HepG2 (cell line): ENCODE measurements at regions of chr20 and their contacts with region 1.

Region 1: GRCh38 chr20:1946762-1947534 is 46.9 kb downstream of the PDYN start:
- DNase-seq: peak; percentile 70
- ATAC-seq: peak; percentile 61
- H3K4me3 ChIP-seq: peak overlapping the region in 2 of 3 experiments; percentile 25 to 49; a peak in 3 of 6 replicates
- H3K27ac ChIP-seq: no peak overlapping the region
- H3K4me1 ChIP-seq: peaks cover 42% of the 10 kb centered on the region
- H3K27me3 ChIP-seq: peaks cover 15 to 47% of the 10 kb centered on the region in 2 experiments; a peak in 4 of 5 replicates
- CTCF ChIP-seq: no peak
- EP300 ChIP-seq: no peak
- POLR2A ChIP-seq: no peak
- RAD21 ChIP-seq: no peak

Region 2: GRCh38 chr20:1900321-1900801 is 46.6 kb before region 1 on chr20:
- CTCF ChIA-PET with region 1: no interaction called
- POLR2A ChIA-PET with region 1: no interaction called
- in situ Hi-C with region 1: no loop called
- intact Hi-C with region 1: loop called (anchors 5 kb)
- DNase-seq: peak; percentile 89
- ATAC-seq: peak; percentile 99
- H3K4me3 ChIP-seq: no peak overlapping the region
- H3K27ac ChIP-seq: no peak overlapping the region
- H3K4me1 ChIP-seq: peaks cover 38% of the 10 kb centered on the region
- H3K27me3 ChIP-seq: peaks cover 6 to 9% of the 10 kb centered on the region in 2 experiments; a peak in 4 of 5 replicates
- CTCF ChIP-seq: peak; percentile 83
- EP300 ChIP-seq: no peak
- POLR2A ChIP-seq: no peak
- RAD21 ChIP-seq: peak; percentile 67